Activated T-helper 1 cell treated with anti-CD3 and anti-CD28 coated beads, Interleukin-12 subunit alpha, Interleukin-12 subunit beta, Interleukin-2, Interleukin-4 antibody, amounts not matched to agents 30 ng/mL and 10 ng/mL and 1 ng/mL, durations not matched to agents 14 hours and 24 hours and 36 hours (primary cell): ENCODE measurements at regions of chr10 and their contacts with region 1.

Region 1: GRCh38 chr10:63068246-63068645 is 64.9 kb upstream of the NRBF2 start:
- DNase-seq: peak; percentile 2
- H3K4me3 Mint-ChIP-seq: no peak overlapping the region
- H3K27ac Mint-ChIP-seq: peak overlapping the region; percentile 19
- H3K4me1 Mint-ChIP-seq: peaks cover 25% of the 10 kb centered on the region
- H3K27me3 Mint-ChIP-seq: peaks cover 5% of the 10 kb centered on the region

Region 2: GRCh38 chr10:61987951-61988379 is 1080.3 kb before region 1 on chr10:
- intact Hi-C with region 1: loop called (anchors 5 kb)
- DNase-seq: peak; percentile 33
- H3K4me3 Mint-ChIP-seq: peak overlapping the region; percentile 78
- H3K27ac Mint-ChIP-seq: peak overlapping the region; percentile 99
- H3K4me1 Mint-ChIP-seq: peaks cover 87% of the 10 kb centered on the region
- H3K27me3 Mint-ChIP-seq: no peaks in the 10 kb centered on the region

Region 3: DNA sequence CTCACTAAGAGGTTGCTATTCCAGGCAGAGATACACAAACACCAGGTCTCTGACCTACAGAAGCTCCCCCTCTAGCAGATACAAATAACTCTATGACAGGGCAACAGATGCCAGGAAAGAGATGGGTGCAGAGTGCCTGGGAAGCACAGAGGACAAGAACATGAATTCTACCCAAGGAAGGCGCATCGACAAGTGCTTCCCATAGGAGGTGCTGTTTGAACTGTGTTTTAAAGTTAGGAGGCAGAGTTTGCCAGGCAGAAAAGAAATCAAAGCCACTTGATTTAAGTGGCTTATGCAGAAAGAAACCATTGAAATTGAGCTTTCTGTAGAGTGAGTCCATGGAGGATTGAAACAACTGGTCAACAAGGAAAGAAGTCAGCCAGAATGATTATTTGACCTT is 216.8 kb before region 1 on chr10:
- intact Hi-C with region 1: loop called (anchors 1 kb)
- DNase-seq: no peak
- H3K4me3 Mint-ChIP-seq: no peak overlapping the region
- H3K27ac Mint-ChIP-seq: peak overlapping the region; percentile 9
- H3K4me1 Mint-ChIP-seq: peaks cover 51% of the 10 kb centered on the region
- H3K27me3 Mint-ChIP-seq: peaks cover 5% of the 10 kb centered on the region

Region 4: DNA sequence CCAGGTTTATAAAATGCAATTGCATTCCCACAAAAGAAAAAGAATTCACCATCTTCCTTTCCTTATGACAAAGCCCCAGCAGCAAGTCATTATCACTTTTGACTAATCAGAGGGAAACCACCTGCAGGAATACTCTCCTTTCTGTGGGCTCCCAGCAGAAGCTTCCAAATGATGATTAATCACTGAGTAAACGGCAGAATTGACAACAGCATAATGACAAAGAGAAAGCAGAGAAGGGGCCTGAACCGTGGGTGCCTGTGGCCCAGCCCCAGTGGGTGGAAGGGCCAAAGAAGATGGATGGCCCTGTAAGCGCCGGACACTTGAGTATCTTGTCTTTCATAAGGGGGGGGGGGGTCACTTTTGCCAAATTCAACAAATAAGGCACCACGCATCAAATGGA is 87.6 kb before region 1 on chr10:
- intact Hi-C with region 1: loop called (anchors 1 kb)
- DNase-seq: no peak
- H3K4me3 Mint-ChIP-seq: no peak overlapping the region
- H3K27ac Mint-ChIP-seq: peak overlapping the region; percentile 89
- H3K4me1 Mint-ChIP-seq: peaks cover 30% of the 10 kb centered on the region
- H3K27me3 Mint-ChIP-seq: no peaks in the 10 kb centered on the region

Region 5: DNA sequence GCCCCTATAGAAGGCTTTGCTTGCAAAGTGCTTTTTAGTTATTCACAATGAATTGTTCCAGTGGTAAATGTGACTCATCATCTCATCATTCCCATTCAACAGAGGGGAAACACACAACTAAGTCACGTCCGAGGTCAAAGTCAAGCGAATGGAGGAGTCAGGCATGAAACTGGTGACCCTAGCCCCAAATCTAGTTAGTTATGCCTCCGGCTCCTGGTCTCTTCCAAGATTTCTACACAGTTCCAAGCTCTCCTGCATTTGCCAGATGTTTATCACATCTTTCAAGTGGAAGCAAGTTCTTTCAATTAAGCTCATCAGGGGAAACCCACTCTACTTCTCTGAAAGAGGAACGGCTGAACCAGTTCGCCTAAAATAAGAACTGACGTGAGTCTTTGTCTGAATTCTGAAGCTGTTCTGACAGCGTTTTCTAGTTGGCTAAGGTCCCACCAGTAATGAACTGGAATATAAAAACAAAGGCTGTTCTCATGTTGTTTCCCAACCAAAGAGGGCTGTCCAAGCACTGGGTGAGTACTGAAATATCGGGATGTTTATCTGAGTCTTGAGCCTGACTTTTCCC is 76.0 kb before region 1 on chr10:
- intact Hi-C with region 1: loop called (anchors 1 kb)
- DNase-seq: no peak
- H3K4me3 Mint-ChIP-seq: peak overlapping the region; percentile 58
- H3K27ac Mint-ChIP-seq: peak overlapping the region; percentile 94
- H3K4me1 Mint-ChIP-seq: peaks cover 52% of the 10 kb centered on the region
- H3K27me3 Mint-ChIP-seq: peaks cover 4% of the 10 kb centered on the region

Region 6: GRCh38 chr10:63133056-63133820 is 65.0 kb after region 1 on chr10 and contains the start of gene NRBF2:
- intact Hi-C with region 1: loop called (anchors 1 kb)
- DNase-seq: peak; percentile 97
- H3K4me3 Mint-ChIP-seq: peak within 1 kb of the TSS; percentile 91
- H3K27ac Mint-ChIP-seq: peak within 1 kb of the TSS; percentile 83
- H3K4me1 Mint-ChIP-seq: peaks cover 32% of the 10 kb centered on the region
- H3K27me3 Mint-ChIP-seq: peaks cover 3% of the 10 kb centered on the region
- total RNA-seq, gene NRBF2: 30.0 and 30.8 TPM in 2 replicates

Region 7: GRCh38 chr10:63481815-63482421 is 413.7 kb after region 1 on chr10:
- intact Hi-C with region 1: no loop called
- DNase-seq: no peak
- H3K4me3 Mint-ChIP-seq: no peak overlapping the region
- H3K27ac Mint-ChIP-seq: no peak overlapping the region
- H3K4me1 Mint-ChIP-seq: no peaks in the 10 kb centered on the region
- H3K27me3 Mint-ChIP-seq: no peaks in the 10 kb centered on the region